K562 (cell line): ENCODE measurements at regions of chr19 and their contacts with region 1.

Region 1: DNA sequence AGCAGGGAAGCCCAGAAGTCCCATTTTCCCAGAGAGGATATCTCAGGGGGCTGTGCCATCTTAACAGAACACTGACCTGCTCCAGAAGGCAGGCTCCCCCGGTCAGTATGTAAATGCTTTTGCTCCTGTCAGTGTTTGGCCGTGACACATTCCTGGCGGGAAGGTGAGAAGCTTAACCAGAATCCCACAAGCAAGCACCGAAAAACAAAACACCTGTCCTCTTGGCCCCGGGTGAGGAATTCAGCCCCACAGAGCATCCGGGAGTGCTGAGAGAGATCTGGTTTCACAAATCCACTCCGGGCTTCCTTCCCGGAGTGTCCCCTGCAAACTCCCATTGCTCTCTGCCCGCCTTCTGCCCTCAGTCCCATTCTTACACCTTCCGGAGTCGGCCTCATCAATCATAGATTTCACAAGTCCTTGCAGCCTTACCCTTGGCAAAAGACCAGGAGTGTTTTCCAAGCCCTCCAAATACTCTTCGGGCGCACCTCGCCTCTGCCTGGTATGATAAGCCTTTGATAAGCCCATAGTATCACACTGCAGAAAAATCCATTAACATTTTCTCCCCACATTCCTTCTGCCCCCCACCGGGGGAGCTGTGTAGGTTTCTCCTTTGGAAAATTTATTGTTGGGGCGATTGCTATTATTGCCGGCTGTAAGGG is 12.2 kb downstream of the TPM4 start:
- DNase-seq: peak in 2 of 4 experiments; percentile 33 to 34
- ATAC-seq: no peak
- H3K4me3 ChIP-seq: no peak overlapping the region
- H3K27ac ChIP-seq: no peak overlapping the region; the same call in 2 of the 3 replicates
- H3K4me1 ChIP-seq: peaks cover 5 to 14% of the 10 kb centered on the region in 2 experiments
- H3K27me3 ChIP-seq: no peaks in the 10 kb centered on the region
- CTCF ChIP-seq: no peak
- EP300 ChIP-seq: no peak
- POLR2A ChIP-seq: no peak
- RAD21 ChIP-seq: no peak

Region 2: GRCh38 chr19:15934332-15935174 is 153.9 kb before region 1 on chr19 and contains the start of gene CYP4F11:
- CTCF ChIA-PET with region 1: no interaction called
- POLR2A ChIA-PET with region 1: no interaction called
- in situ Hi-C with region 1: no loop called
- intact Hi-C with region 1: no loop called
- DNase-seq: no peak
- ATAC-seq: no peak
- H3K4me3 ChIP-seq: no peak within 1 kb of the TSS
- H3K27ac ChIP-seq: no peak within 1 kb of the TSS
- H3K4me1 ChIP-seq: peaks cover 0 to 3% of the 10 kb centered on the region in 2 experiments; a peak in 1 of 5 replicates
- H3K27me3 ChIP-seq: peaks cover 0 to 24% of the 10 kb centered on the region in 2 experiments; a peak in 2 of 5 replicates
- CTCF ChIP-seq: no peak
- EP300 ChIP-seq: no peak
- POLR2A ChIP-seq: no peak
- RAD21 ChIP-seq: no peak
- polyA plus RNA-seq, gene CYP4F11: not detected

Region 3: DNA sequence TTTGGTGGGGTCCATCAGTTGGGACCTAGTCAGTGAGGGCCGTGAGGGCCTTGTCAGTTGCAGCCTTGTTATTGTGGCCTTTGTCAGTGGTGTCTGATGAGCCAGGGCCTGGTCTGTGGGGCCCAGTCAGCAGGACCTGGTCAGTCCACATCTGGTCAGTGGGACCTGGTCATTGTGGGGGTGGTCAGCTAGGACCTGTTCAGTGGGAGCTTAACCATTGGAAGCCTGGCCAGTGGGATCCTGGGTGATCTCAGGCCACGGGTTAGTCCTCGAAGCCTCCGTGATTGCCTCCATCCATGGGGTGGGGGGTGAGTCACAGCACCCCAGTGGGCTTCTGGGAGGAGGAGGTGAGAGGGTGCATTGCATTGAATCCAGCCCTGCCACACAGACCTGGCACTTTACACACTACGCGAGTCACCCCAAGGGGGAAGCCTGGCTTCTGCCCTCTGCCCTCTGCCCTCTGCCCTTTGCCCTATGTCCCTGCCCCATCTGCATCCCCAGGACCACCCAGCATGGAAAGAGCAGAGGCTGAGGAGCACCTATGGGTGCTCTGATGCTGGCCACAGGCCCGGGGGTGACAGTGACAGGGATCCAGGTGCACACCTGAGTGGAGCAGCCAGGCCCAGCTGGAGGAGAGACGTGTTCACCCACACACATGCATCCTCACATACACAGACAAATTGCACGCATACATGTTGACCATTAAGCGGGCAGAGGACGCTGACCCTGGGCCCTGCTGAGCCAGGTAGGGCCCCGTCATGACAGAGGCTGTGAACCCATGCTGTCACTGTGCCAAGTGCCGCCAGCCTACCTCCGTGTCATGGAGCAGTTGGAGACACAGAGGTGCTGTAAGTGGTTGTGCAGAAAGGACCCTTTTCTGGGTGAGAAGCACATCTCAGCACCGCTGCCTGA is 72.0 kb before region 1 on chr19:
- CTCF ChIA-PET with region 1: no interaction called
- POLR2A ChIA-PET with region 1: no interaction called
- in situ Hi-C with region 1: no loop called
- intact Hi-C with region 1: no loop called
- DNase-seq: no peak
- ATAC-seq: no peak
- H3K4me3 ChIP-seq: no peak overlapping the region
- H3K27ac ChIP-seq: no peak overlapping the region
- H3K4me1 ChIP-seq: peaks cover 0 to 9% of the 10 kb centered on the region in 2 experiments; a peak in 1 of 5 replicates
- H3K27me3 ChIP-seq: peaks cover 0 to 5% of the 10 kb centered on the region in 2 experiments; a peak in 2 of 5 replicates
- CTCF ChIP-seq: no peak
- EP300 ChIP-seq: no peak
- POLR2A ChIP-seq: no peak
- RAD21 ChIP-seq: no peak

Region 4: DNA sequence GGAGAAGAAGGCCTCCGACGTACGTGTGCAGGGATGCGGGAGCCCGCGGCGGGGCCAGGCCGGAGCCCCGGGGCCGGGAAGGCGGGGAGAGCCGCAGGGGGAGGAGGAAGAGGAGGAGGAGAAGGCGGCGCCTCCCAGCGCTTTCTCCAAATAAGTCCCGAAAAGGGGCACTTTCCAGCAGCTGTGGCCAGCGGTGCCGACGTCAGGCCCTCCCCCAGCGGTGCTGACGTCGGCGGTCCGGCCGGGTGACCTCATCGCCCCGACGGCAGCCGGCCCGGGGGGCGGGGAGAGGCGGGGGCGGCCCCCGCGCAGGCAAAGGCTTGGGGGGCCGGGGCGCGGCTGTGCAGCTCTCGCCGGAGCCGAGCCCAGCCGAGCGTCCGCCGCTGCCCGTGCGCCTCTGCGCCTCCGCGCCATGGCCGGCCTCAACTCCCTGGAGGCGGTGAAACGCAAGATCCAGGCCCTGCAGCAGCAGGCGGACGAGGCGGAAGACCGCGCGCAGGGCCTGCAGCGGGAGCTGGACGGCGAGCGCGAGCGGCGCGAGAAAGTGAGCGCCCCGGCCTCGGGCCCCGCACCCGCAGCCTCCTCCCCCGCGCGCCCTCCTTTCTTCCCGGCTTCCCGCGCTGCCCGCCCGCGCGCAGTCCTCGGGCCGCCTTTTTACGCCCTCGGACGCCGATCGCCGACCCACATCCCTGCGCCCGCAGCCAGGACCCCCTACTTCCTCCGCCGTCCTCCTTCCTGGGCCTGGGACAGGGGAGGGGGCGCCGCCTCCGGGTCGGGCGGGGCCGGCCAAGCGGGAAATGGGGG is 12.1 kb before region 1 on chr19 and contains the start of gene TPM4:
- CTCF ChIA-PET with region 1: no interaction called
- POLR2A ChIA-PET with region 1: interaction called, 15 read pairs
- in situ Hi-C with region 1: no loop called
- intact Hi-C with region 1: no loop called
- DNase-seq: peak; percentile 82 to 93 (median 84)
- ATAC-seq: peak; percentile 78
- H3K4me3 ChIP-seq: peak within 1 kb of the TSS; percentile 81
- H3K27ac ChIP-seq: peak within 1 kb of the TSS; percentile 92
- H3K4me1 ChIP-seq: peaks cover 38 to 48% of the 10 kb centered on the region in 2 experiments
- H3K27me3 ChIP-seq: no peaks in the 10 kb centered on the region
- CTCF ChIP-seq: no peak
- EP300 ChIP-seq: peak; percentile 39; the same call in 1 of the 2 replicates
- POLR2A ChIP-seq: peak; percentile 67
- RAD21 ChIP-seq: no peak
- polyA plus RNA-seq, gene TPM4: 28.1 to 34.0 TPM

Region 5: DNA sequence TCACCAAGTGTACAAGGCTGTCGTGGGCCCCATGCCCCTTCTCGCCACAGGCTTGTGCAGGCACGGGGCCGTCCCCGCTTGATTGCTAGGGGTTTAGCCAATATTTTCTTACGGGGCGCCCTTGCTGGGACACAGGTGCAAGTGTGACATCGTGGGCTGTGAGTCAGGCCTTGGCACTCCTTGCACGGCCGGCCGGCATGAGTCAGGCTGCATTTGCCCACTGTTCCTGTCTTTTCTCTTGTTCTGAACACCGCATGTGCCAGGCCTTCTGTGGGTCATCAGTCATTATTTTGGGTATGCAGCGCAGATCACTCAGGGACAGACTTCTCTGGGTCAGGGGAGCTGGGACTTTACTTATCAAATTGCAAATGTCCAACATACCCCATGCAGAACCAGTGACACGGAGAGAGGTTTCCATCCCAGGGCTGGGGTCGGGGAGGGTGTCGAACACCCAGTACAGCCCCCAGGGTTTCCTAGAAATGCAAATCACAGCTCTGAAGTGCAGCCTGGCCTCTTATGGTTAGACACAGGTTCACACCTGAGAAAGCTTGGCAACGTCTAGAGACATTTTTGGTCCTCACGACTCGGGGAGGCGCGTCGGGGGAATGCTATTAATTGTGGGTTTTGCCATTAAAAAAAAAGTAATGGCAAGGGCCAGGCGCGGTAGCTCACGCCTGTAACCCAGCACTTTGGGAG is 213.7 kb after region 1 on chr19:
- CTCF ChIA-PET with region 1: no interaction called
- POLR2A ChIA-PET with region 1: no interaction called
- in situ Hi-C with region 1: no loop called
- intact Hi-C with region 1: no loop called
- DNase-seq: no peak
- ATAC-seq: no peak
- H3K4me3 ChIP-seq: no peak overlapping the region
- H3K27ac ChIP-seq: no peak overlapping the region
- H3K4me1 ChIP-seq: peaks cover 0 to 4% of the 10 kb centered on the region in 2 experiments; a peak in 1 of 5 replicates
- H3K27me3 ChIP-seq: peaks cover 10 to 27% of the 10 kb centered on the region in 2 experiments; a peak in 4 of 5 replicates
- CTCF ChIP-seq: no peak
- EP300 ChIP-seq: no peak
- POLR2A ChIP-seq: no peak
- RAD21 ChIP-seq: no peak